Ascending aorta (tissue), 2 donors: ENCODE measurements at regions of chr15 and their contacts with region 1.

Region 1: GRCh38 chr15:33292717-33293307 is 18.0 kb upstream of the RYR3 start:
- DNase-seq: peak in 1 of 2 donors; percentile 74
- H3K4me3 ChIP-seq: peak overlapping the region in 1 of 2 donors; percentile 56
- H3K27ac ChIP-seq: no peak overlapping the region
- H3K4me1 ChIP-seq: peaks cover 0 to 5% of the 10 kb centered on the region in 2 donors
- H3K27me3 ChIP-seq: no peaks in the 10 kb centered on the region
- CTCF ChIP-seq: peak; percentile 46 to 71 (median 57)

Region 2: GRCh38 chr15:33608714-33609113 is 315.9 kb after region 1 on chr15:
- intact Hi-C with region 1: loop called (anchors 5 kb)
- DNase-seq: no peak
- H3K4me3 ChIP-seq: no peak overlapping the region
- H3K27ac ChIP-seq: no peak overlapping the region
- H3K4me1 ChIP-seq: no peaks in the 10 kb centered on the region
- H3K27me3 ChIP-seq: no peaks in the 10 kb centered on the region
- CTCF ChIP-seq: peak in 1 of 3 experiments; percentile 34